Heart right ventricle (tissue), 16 donors: ENCODE measurements at regions of chr1 and their contacts with region 1.

Region 1: GRCh38 chr1:149972547-149972946 is 35.9 kb upstream of the MTMR11 start:
- DNase-seq: no peak
- ATAC-seq: no peak
- H3K4me3 ChIP-seq: no peak overlapping the region
- H3K27ac ChIP-seq: no peak overlapping the region
- H3K4me1 ChIP-seq: peaks cover 0 to 2% (median 0%) of the 10 kb centered on the region in 9 donors
- H3K27me3 ChIP-seq: peaks cover 0 to 64% (median 0%) of the 10 kb centered on the region in 7 donors
- CTCF ChIP-seq: no peak

Region 2: DNA sequence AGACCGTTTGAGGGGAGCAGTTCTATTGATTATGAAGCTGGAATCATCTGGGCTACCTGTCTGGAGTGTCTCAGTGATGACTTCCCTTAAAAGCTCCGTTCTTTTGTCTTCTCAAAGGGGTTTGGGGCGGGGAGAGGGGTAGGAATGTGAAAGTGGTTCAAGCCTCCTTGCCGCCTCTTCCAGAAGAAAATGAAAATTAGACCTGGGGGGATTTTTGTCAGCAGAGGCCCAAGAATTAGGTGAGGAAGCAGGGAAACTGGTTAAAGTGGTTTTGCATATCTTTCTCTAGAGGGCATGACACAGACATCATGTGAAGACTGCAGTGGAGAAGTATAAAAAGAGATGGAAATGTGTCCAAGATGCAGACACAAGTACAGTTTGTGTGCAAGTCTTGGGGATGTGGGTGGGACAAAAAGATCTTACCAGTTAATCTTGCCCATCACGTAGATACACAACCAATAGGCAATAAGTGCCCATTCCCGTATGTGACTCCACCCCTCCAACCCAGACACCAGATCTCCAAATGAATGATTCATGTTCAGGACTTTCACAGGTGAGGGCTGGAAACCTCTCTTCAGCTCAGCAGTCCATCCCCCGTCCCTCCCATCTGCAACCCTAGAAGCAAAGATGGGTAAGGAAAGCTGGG is 35.4 kb before region 1 on chr1:
- intact Hi-C with region 1: no loop called
- DNase-seq: no peak
- ATAC-seq: no peak
- H3K4me3 ChIP-seq: peak overlapping the region in 9 of 10 donors; percentile 35 to 63 (median 49)
- H3K27ac ChIP-seq: peak overlapping the region in 6 of 10 donors; percentile 19 to 84 (median 74)
- H3K4me1 ChIP-seq: peaks cover 0 to 59% (median 40%) of the 10 kb centered on the region in 9 donors
- H3K27me3 ChIP-seq: no peaks in the 10 kb centered on the region
- CTCF ChIP-seq: no peak

Region 3: DNA sequence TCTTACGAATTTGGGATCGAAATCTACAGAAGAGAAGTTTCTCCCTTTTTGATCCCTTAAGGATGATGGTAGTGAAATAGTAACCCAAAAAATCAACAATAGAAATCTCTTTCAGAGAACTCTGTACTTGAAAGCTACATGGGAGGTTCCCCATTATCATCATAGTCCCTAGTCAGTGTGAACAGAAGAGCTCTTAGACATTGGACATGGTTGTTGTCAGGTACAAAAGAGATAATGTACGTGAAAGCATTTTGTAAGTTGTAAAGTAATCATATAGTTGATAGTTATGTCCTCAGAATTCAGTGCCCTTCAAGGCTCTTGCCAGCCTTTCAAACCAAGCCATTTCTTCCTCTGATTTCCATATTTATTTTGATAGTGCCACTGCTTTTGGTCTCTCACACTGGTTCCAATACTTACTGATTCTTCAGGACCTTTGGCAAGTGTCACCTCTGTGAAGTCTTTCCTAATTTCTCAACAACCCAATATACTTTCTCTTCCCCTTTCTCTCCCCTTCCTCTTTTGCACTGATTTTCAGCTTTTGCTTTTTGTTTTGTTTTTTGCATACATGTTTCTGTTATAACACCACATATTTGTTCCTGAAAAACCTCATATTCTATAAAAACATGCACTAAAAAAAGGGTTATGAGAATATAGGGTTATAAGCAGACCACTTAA is 117.4 kb after region 1 on chr1:
- intact Hi-C with region 1: no loop called
- DNase-seq: no peak
- ATAC-seq: no peak
- H3K4me3 ChIP-seq: no peak overlapping the region
- H3K27ac ChIP-seq: peak overlapping the region in 4 of 10 donors; percentile 12 to 46 (median 17)
- H3K4me1 ChIP-seq: peaks cover 0 to 30% (median 8%) of the 10 kb centered on the region in 9 donors
- H3K27me3 ChIP-seq: no peaks in the 10 kb centered on the region
- CTCF ChIP-seq: no peak

Region 4: GRCh38 chr1:150168960-150169601 is 196.5 kb after region 1 on chr1:
- intact Hi-C with region 1: loop called in 2 of 10 experiments (anchors 5 to 10 kb)
- DNase-seq: peak; percentile 67 to 73
- ATAC-seq: peak; percentile 36 to 76 (median 70)
- H3K4me3 ChIP-seq: no peak overlapping the region
- H3K27ac ChIP-seq: no peak overlapping the region
- H3K4me1 ChIP-seq: peaks cover 0 to 27% (median 11%) of the 10 kb centered on the region in 9 donors
- H3K27me3 ChIP-seq: no peaks in the 10 kb centered on the region
- CTCF ChIP-seq: peak; percentile 72 to 91 (median 84)